Ovary (tissue), 10 donors: ENCODE measurements at regions of chr1 and their contacts with region 1.

Region 1: DNA sequence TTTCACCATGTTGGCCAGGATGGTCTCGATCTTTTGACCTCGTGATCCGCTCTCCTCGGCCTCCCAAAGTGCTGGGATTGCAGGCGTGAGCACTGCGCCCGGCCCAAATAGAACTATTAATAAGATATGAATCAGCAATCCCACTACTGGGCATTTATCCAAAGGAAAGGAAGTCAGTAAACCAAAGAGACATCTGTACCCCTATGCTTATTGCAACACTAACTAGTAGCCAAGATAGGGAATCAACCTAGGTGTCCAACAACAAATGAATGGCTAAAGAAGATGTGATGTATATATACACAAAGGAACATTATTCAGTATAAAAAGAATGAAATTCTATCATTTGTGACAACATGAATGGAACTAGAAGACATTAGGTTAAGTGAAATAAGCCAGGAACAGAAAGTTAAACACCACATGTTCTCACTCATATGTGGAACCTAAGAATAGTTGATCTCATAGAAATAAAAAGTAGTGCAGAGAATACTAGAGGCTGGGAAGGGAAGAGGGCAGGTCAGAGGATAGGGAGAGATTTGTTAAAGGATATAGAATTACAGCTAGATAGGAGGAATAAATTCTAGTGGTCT is 48.8 kb downstream of the XPR1 start:
- DNase-seq: no peak
- H3K4me3 ChIP-seq: no peak overlapping the region
- H3K27ac ChIP-seq: no peak overlapping the region
- H3K4me1 ChIP-seq: no peaks in the 10 kb centered on the region
- H3K27me3 ChIP-seq: no peaks in the 10 kb centered on the region
- CTCF ChIP-seq: no peak
- EP300 ChIP-seq: no peak
- POLR2A ChIP-seq: no peak

Region 2: DNA sequence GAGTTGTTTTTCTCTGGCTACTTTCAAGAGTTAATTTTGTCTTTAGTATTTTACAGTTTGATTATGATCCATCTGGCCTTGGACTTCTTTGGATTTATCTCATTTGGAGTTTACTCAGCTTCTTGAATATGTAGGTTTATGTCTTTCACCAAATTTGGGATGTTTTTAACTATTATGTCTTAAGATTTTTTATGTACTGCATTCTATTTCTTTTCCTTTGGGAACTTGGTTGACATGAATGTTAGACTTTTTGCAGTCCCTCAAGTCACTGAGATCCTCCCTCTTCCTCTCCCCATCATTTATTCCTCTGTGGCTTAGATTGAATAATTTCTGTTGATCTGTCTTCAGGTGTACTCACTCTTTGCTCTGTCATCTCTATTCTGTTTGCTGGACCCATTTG is 63.2 kb after region 1 on chr1:
- intact Hi-C with region 1: loop called in 1 of 4 experiments (anchors 2 kb)
- DNase-seq: no peak
- H3K4me3 ChIP-seq: no peak overlapping the region
- H3K27ac ChIP-seq: no peak overlapping the region
- H3K4me1 ChIP-seq: no peaks in the 10 kb centered on the region
- H3K27me3 ChIP-seq: no peaks in the 10 kb centered on the region
- CTCF ChIP-seq: no peak
- EP300 ChIP-seq: no peak
- POLR2A ChIP-seq: no peak